GM10248 (cell line): ENCODE measurements at regions of chr3 and their contacts with region 1.

Region 1: GRCh38 chr3:105827959-105828358 is 40.9 kb downstream of the CBLB start:
- DNase-seq: no peak
- CTCF ChIP-seq: no peak

Region 2: DNA sequence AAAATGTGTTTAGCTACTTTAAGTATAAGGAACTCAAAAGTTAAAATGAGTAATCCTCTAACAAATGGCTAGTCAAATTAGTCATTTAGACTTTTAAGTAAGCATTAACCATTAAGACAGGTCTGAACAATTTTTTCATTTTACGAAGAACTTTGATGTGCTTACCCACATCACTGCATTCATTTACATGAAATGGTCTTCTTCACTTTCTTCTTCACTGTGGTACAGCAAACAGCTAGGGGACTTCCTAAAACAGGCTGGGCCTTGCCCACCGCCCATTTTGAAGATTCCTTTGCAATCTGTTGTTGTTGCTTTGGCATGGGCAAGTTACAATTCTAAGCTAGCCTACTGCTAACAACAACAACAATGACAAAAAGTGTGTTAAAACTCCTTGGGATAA is 26.6 kb before region 1 on chr3:
- CTCF ChIA-PET with region 1: interaction called, 12 read pairs
- POLR2A ChIA-PET with region 1: interaction called, 4 read pairs
- DNase-seq: no peak
- CTCF ChIP-seq: no peak

Region 3: DNA sequence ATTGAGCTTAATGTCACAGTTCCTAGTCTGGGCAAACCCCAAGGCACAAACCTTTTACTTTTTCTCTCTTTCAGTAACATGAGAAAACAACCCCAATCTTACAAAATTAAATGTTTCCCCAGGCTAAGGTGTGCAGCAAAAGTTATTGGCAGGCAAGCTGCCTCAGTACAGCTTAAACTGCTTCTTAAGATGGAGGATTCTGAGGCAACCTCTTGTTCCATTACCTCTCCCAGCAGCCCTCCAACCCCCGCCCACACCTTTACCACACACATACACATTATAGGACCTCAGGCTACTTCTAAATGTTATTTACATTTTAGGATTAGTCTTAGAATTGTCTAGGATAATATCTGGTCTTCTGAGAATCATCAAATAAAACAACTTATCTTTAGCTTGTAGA is 63.1 kb after region 1 on chr3:
- CTCF ChIA-PET with region 1: no interaction called
- POLR2A ChIA-PET with region 1: no interaction called
- DNase-seq: no peak
- CTCF ChIP-seq: no peak